ENCODE measurements at regions of chr14 and their contacts with region 1.

Region 1: DNA sequence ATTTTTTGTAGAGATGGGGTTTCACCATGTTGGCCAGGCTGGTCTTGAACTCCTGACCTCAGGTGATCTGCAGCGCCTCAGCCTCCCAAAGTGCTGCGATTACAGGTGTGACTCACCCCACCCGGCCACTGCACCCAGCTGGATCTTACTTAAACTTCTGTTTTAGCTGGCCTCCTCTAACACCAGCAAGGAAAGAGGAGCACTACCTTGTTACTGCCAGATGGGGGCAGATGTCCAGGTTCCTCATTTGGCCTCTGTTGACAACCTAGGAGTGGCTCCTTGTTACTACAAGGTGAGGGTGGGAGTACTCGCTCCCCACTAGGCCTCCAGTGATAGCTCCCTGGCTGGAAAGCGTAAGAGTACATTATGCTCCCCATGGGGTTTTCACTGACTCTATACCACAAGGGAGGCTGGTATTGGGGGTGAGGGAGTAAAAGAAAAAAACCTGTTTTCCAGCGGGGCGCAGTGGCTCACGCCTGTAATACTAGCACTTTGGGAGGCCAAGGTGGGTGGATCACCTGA is 13.1 kb upstream of the ARF6 start:
- DNase-seq: no peak
- ATAC-seq: peak; percentile 98
- H3K4me3 ChIP-seq: no peak overlapping the region
- H3K27ac ChIP-seq: no peak overlapping the region
- H3K4me1 ChIP-seq: no peaks in the 10 kb centered on the region
- H3K27me3 ChIP-seq: no peaks in the 10 kb centered on the region
- CTCF ChIP-seq: peak; percentile 50 to 74 (median 72)
- EP300 ChIP-seq: no peak
- POLR2A ChIP-seq: no peak
- RAD21 ChIP-seq: peak; percentile 72

Region 2: DNA sequence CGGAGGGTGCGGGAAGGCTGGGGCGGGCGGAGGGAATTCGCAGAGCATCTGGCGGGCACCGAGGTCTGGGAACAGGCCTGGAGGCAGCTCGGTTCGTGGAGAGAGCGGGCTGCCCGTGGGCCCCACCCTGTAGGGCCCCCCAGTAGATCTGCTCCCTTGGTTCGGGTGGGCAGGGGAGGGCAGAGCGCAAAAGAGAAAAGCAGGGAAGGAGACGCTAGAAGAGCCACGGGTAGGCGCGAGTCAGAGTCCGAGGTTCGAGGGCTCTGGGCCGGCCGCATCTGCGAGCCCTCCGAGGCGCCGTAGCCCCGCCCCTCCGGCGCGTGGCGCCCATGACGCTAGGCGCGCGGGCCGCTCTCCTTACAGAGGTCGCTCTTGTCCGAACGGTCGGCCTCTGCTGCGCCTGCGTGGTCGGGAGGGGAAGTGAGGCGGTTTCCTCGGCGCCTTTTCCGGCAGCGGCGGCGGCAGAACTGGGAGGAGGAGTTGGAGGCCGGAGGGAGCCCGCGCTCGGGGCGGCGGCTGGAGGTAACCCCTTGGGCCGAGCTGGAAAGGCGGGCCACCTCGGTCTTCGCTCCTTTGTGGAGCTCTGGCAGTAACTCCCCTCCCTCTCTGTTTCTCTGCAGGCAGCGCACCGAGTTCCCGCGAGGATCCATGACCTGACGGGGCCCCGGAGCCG is 13.0 kb after region 1 on chr14 and contains the start of gene ARF6:
- CTCF ChIA-PET with region 1: interaction called, 16 read pairs
- POLR2A ChIA-PET with region 1: interaction called, 7 read pairs
- RAD21 ChIA-PET with region 1: interaction called, 5 read pairs
- SMC1A ChIA-PET with region 1: interaction called, 5 read pairs
- in situ Hi-C with region 1: no loop called
- intact Hi-C with region 1: no loop called
- DNase-seq: peak; percentile 81
- ATAC-seq: peak; percentile 83
- H3K4me3 ChIP-seq: peak within 1 kb of the TSS; percentile 97
- H3K27ac ChIP-seq: peak within 1 kb of the TSS; percentile 100
- H3K4me1 ChIP-seq: peaks cover 5% of the 10 kb centered on the region
- H3K27me3 ChIP-seq: no peaks in the 10 kb centered on the region
- CTCF ChIP-seq: peak in 2 of 3 experiments; percentile 15 to 29; a peak in 1 of 6 replicates
- EP300 ChIP-seq: no peak
- POLR2A ChIP-seq: peak; percentile 92
- RAD21 ChIP-seq: 0 out of 2 replicates have a peak, but pooled peaks have one; percentile 10
- polyA plus RNA-seq, gene ARF6: 46.8 to 86.6 TPM

Region 3: GRCh38 chr14:50008562-50009350 is 129.0 kb after region 1 on chr14:
- CTCF ChIA-PET with region 1: interaction called, 12 read pairs
- POLR2A ChIA-PET with region 1: interaction called, 5 read pairs
- RAD21 ChIA-PET with region 1: no interaction called
- SMC1A ChIA-PET with region 1: interaction called, 8 read pairs
- in situ Hi-C with region 1: no loop called
- intact Hi-C with region 1: no loop called
- DNase-seq: no peak
- ATAC-seq: peak; percentile 60
- H3K4me3 ChIP-seq: no peak overlapping the region
- H3K27ac ChIP-seq: no peak overlapping the region
- H3K4me1 ChIP-seq: peaks cover 14% of the 10 kb centered on the region
- H3K27me3 ChIP-seq: no peaks in the 10 kb centered on the region
- CTCF ChIP-seq: no peak
- EP300 ChIP-seq: no peak
- POLR2A ChIP-seq: no peak
- RAD21 ChIP-seq: no peak

Region 4: DNA sequence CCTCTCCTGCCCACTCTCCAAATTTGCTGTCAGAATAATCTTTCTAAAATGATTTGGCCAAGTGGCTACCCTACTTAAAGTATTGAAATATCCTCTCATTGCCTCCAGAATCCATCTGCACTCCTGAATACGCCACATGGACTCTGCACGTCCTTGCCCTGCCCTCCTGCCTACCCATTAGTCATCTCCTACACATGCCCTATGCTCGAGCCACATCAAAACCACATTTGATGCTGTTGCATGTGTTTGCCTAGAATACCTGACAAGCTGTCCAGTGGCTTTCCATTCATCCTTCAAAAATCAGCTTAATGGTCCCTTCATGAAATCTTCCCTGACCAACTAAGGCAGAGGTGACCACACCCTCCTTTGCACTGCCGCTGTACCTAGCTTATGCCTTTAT is 219.6 kb after region 1 on chr14:
- CTCF ChIA-PET with region 1: interaction called, 5 read pairs
- POLR2A ChIA-PET with region 1: interaction called, 3 read pairs
- RAD21 ChIA-PET with region 1: interaction called, 8 read pairs
- SMC1A ChIA-PET with region 1: interaction called, 19 read pairs
- in situ Hi-C with region 1: no loop called
- intact Hi-C with region 1: no loop called
- DNase-seq: no peak
- ATAC-seq: no peak
- H3K4me3 ChIP-seq: no peak overlapping the region
- H3K27ac ChIP-seq: no peak overlapping the region
- H3K4me1 ChIP-seq: peaks cover 12% of the 10 kb centered on the region
- H3K27me3 ChIP-seq: no peaks in the 10 kb centered on the region
- CTCF ChIP-seq: no peak
- EP300 ChIP-seq: no peak
- POLR2A ChIP-seq: no peak
- RAD21 ChIP-seq: no peak

Region 5: GRCh38 chr14:50109342-50109741 is 229.6 kb after region 1 on chr14:
- CTCF ChIA-PET with region 1: interaction called, 12 read pairs
- POLR2A ChIA-PET with region 1: interaction called, 9 read pairs
- RAD21 ChIA-PET with region 1: interaction called, 8 read pairs
- SMC1A ChIA-PET with region 1: interaction called, 19 read pairs
- in situ Hi-C with region 1: no loop called
- intact Hi-C with region 1: no loop called
- DNase-seq: no peak
- ATAC-seq: no peak
- H3K4me3 ChIP-seq: no peak overlapping the region
- H3K27ac ChIP-seq: no peak overlapping the region
- H3K4me1 ChIP-seq: peaks cover 18% of the 10 kb centered on the region
- H3K27me3 ChIP-seq: no peaks in the 10 kb centered on the region
- CTCF ChIP-seq: no peak
- EP300 ChIP-seq: no peak
- POLR2A ChIP-seq: no peak
- RAD21 ChIP-seq: no peak

Region 6: GRCh38 chr14:50303744-50304471 is 424.2 kb after region 1 on chr14:
- CTCF ChIA-PET with region 1: no interaction called
- POLR2A ChIA-PET with region 1: no interaction called
- RAD21 ChIA-PET with region 1: no interaction called
- SMC1A ChIA-PET with region 1: no interaction called
- in situ Hi-C with region 1: no loop called
- intact Hi-C with region 1: no loop called
- DNase-seq: no peak
- ATAC-seq: peak; percentile 52
- H3K4me3 ChIP-seq: no peak overlapping the region
- H3K27ac ChIP-seq: no peak overlapping the region
- H3K4me1 ChIP-seq: no peaks in the 10 kb centered on the region
- H3K27me3 ChIP-seq: no peaks in the 10 kb centered on the region
- CTCF ChIP-seq: no peak
- EP300 ChIP-seq: no peak
- POLR2A ChIP-seq: no peak
- RAD21 ChIP-seq: no peak

Measured in GM12878 (cell line).